ENCODE measurements at regions of chr2 and their contacts with region 1.

Region 1: DNA sequence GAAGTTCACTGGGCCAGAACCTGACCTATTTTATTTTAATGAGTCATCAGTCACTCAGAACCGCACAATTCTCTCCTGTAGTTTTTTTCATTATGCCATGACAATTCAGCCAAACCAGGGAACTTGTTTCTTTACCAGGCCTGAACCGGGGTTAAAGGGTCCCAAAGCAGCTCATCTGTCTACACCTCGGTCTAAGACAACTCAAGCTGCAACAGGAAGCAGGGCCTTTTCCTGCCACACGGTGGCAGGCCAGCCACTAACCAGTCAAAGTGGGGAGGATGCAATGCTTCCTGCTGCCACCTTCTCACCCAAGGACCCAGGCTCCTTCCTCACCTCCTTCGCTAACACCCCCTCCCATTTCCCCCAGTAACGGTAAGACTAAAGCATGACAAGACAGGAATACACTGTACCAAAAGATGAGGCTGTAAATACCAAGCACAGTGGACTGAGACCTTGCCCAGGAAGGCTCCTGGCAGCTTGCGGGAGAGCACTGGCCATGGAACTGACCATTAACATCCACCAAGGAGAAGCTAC is 56.7 kb upstream of the ACKR3 start:
- DNase-seq: peak; percentile 52
- H3K27ac ChIP-seq: no peak overlapping the region
- CTCF ChIP-seq: peak; percentile 75

Region 2: GRCh38 chr2:237026981-237027711 is 514.2 kb after region 1 on chr2:
- CTCF ChIA-PET with region 1: interaction called, 18 read pairs
- POLR2A ChIA-PET with region 1: no interaction called
- DNase-seq: peak; percentile 53
- H3K27ac ChIP-seq: no peak overlapping the region
- CTCF ChIP-seq: peak; percentile 69

Measured in RWPE1 (cell line).